ENCODE measurements at regions of chr22 and their contacts with region 1.

Region 1: GRCh38 chr22:42614312-42615091 is at the start of gene POLDIP3:
- DNase-seq: peak; percentile 99
- H3K4me3 ChIP-seq: peak within 1 kb of the TSS; percentile 74 to 84
- H3K4me3 Mint-ChIP-seq: peak within 1 kb of the TSS; percentile 88 to 98 (median 96)
- H3K27ac ChIP-seq: peak within 1 kb of the TSS; percentile 90
- H3K27ac Mint-ChIP-seq: peak within 1 kb of the TSS; percentile 99 to 100 (median 100)
- H3K4me1 ChIP-seq: peaks cover 54% of the 10 kb centered on the region
- H3K4me1 Mint-ChIP-seq: peaks cover 35 to 70% (median 47%) of the 10 kb centered on the region in 4 donors
- H3K27me3 ChIP-seq: no peaks in the 10 kb centered on the region
- H3K27me3 Mint-ChIP-seq: no peaks in the 10 kb centered on the region
- total RNA-seq, gene POLDIP3: 80.6 to 82.3 TPM

Region 2: GRCh38 chr22:42079319-42080251 is 534.9 kb before region 1 on chr22 and contains the start of gene SMDT1:
- CTCF ChIA-PET with region 1: no interaction called
- POLR2A ChIA-PET with region 1: interaction called, 5 read pairs
- intact Hi-C with region 1: loop called (anchors 10 kb)
- DNase-seq: peak; percentile 98 to 99 (median 99)
- H3K4me3 ChIP-seq: peak within 1 kb of the TSS; percentile 70 to 78
- H3K4me3 Mint-ChIP-seq: peak within 1 kb of the TSS; percentile 88 to 98 (median 96)
- H3K27ac ChIP-seq: peak within 1 kb of the TSS; percentile 97
- H3K27ac Mint-ChIP-seq: peak within 1 kb of the TSS; percentile 93 to 100 (median 99)
- H3K4me1 ChIP-seq: peaks cover 38% of the 10 kb centered on the region
- H3K4me1 Mint-ChIP-seq: peaks cover 19 to 58% (median 38%) of the 10 kb centered on the region in 4 donors
- H3K27me3 ChIP-seq: no peaks in the 10 kb centered on the region
- H3K27me3 Mint-ChIP-seq: no peaks in the 10 kb centered on the region
- total RNA-seq, gene SMDT1: 101 to 105 TPM

Region 3: GRCh38 chr22:42214633-42215415 is 399.7 kb before region 1 on chr22:
- CTCF ChIA-PET with region 1: no interaction called
- POLR2A ChIA-PET with region 1: no interaction called
- intact Hi-C with region 1: no loop called
- DNase-seq: no peak
- H3K4me3 ChIP-seq: no peak overlapping the region
- H3K4me3 Mint-ChIP-seq: no peak overlapping the region
- H3K27ac ChIP-seq: no peak overlapping the region
- H3K27ac Mint-ChIP-seq: peak overlapping the region in 6 of 7 donors; percentile 13 to 74 (median 50)
- H3K4me1 ChIP-seq: peaks cover 44% of the 10 kb centered on the region
- H3K4me1 Mint-ChIP-seq: peaks cover 40 to 65% (median 49%) of the 10 kb centered on the region in 4 donors
- H3K27me3 ChIP-seq: no peaks in the 10 kb centered on the region
- H3K27me3 Mint-ChIP-seq: no peaks in the 10 kb centered on the region

Region 4: GRCh38 chr22:42581762-42582716 is 32.5 kb before region 1 on chr22:
- CTCF ChIA-PET with region 1: interaction called, 3 read pairs
- POLR2A ChIA-PET with region 1: interaction called, 17 read pairs
- intact Hi-C with region 1: loop called (anchors 1 kb)
- DNase-seq: peak; percentile 74 to 86 (median 79)
- H3K4me3 ChIP-seq: peak overlapping the region in 1 of 2 donors; percentile 66
- H3K4me3 Mint-ChIP-seq: peak overlapping the region; percentile 85 to 98 (median 92)
- H3K27ac ChIP-seq: peak overlapping the region; percentile 59
- H3K27ac Mint-ChIP-seq: peak overlapping the region; percentile 81 to 92 (median 86)
- H3K4me1 ChIP-seq: peaks cover 7% of the 10 kb centered on the region
- H3K4me1 Mint-ChIP-seq: peaks cover 9 to 21% (median 14%) of the 10 kb centered on the region in 4 donors
- H3K27me3 ChIP-seq: no peaks in the 10 kb centered on the region
- H3K27me3 Mint-ChIP-seq: no peaks in the 10 kb centered on the region

Region 5: GRCh38 chr22:42626951-42627625 is 12.6 kb after region 1 on chr22:
- CTCF ChIA-PET with region 1: no interaction called
- POLR2A ChIA-PET with region 1: interaction called, 15 read pairs
- intact Hi-C with region 1: no loop called
- DNase-seq: no peak
- H3K4me3 ChIP-seq: no peak overlapping the region
- H3K4me3 Mint-ChIP-seq: no peak overlapping the region
- H3K27ac ChIP-seq: no peak overlapping the region
- H3K27ac Mint-ChIP-seq: peak overlapping the region in 1 of 7 donors; percentile 10
- H3K4me1 ChIP-seq: no peaks in the 10 kb centered on the region
- H3K4me1 Mint-ChIP-seq: no peaks in the 10 kb centered on the region
- H3K27me3 ChIP-seq: no peaks in the 10 kb centered on the region
- H3K27me3 Mint-ChIP-seq: no peaks in the 10 kb centered on the region

Region 6: GRCh38 chr22:42769574-42770447 is 155.3 kb after region 1 on chr22:
- CTCF ChIA-PET with region 1: no interaction called
- POLR2A ChIA-PET with region 1: no interaction called
- intact Hi-C with region 1: no loop called
- DNase-seq: no peak
- H3K4me3 ChIP-seq: no peak overlapping the region
- H3K4me3 Mint-ChIP-seq: peak overlapping the region in 1 of 8 donors; percentile 34
- H3K27ac ChIP-seq: no peak overlapping the region
- H3K27ac Mint-ChIP-seq: no peak overlapping the region
- H3K4me1 ChIP-seq: no peaks in the 10 kb centered on the region
- H3K4me1 Mint-ChIP-seq: no peaks in the 10 kb centered on the region
- H3K27me3 ChIP-seq: peaks cover 4% of the 10 kb centered on the region
- H3K27me3 Mint-ChIP-seq: peaks cover 7 to 10% of the 10 kb centered on the region in 2 donors

Region 7: DNA sequence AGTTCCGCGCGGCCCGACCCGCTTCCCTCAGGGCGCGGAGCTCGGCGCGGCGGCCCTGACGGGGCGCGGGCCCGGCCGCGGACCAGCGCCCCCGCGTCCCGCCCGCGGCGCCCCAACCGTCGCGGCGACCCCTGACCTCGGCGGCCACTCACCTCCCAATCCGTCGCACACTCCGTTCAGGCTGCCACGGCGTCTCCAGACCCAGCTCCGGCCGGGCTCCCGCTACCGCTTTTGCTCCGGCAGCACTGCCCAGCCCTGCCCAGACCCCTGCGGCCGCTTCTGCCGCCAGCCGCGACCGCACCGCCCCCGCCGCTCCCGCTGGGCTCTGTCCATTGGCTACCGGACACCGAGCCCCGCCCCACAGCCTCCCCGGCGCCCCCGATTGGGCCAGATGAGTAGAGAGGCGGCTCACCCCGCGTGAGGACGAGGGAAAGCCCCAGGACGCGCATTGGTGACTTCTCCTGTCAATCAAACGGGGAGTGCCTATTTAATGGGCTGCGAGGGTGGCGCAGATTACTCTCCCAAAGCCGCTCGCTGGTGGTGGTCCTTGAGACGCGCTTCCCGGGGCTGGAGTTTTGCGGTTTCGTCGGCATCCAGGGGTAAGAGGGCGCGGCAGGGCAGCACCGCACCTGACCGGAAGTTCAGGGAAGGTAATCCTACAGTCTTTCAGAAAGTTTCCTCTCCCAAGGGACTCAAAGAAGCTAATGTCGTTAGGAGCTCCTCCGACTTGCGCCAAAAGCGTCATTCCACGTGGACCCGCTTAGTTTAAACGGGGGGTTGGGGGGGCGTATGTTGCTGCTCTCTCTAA is 400.6 kb after region 1 on chr22 and contains the start of gene PACSIN2:
- CTCF ChIA-PET with region 1: no interaction called
- POLR2A ChIA-PET with region 1: interaction called, 3 read pairs
- intact Hi-C with region 1: loop called (anchors 10 kb)
- DNase-seq: peak; percentile 97 to 99 (median 97)
- H3K4me3 ChIP-seq: peak within 1 kb of the TSS; percentile 74 to 76
- H3K4me3 Mint-ChIP-seq: peak within 1 kb of the TSS; percentile 97 to 99 (median 98)
- H3K27ac ChIP-seq: peak within 1 kb of the TSS; percentile 79
- H3K27ac Mint-ChIP-seq: peak within 1 kb of the TSS; percentile 92 to 99 (median 97)
- H3K4me1 ChIP-seq: peaks cover 27% of the 10 kb centered on the region
- H3K4me1 Mint-ChIP-seq: peaks cover 22 to 59% (median 37%) of the 10 kb centered on the region in 4 donors
- H3K27me3 ChIP-seq: no peaks in the 10 kb centered on the region
- H3K27me3 Mint-ChIP-seq: no peaks in the 10 kb centered on the region
- total RNA-seq, gene PACSIN2: 54.5 to 55.0 TPM